Naive thymus-derived CD4-positive, alpha-beta T cell (primary cell): ENCODE measurements at regions of chr6 and their contacts with region 1.

Region 1: GRCh38 chr6:41976794-41977484 is 35.3 kb upstream of the CCND3 start:
- DNase-seq: peak in 1 of 9 donors; percentile 27
- ATAC-seq: no peak
- H3K4me3 ChIP-seq: no peak overlapping the region
- H3K4me3 Mint-ChIP-seq: peak overlapping the region in 8 of 10 donors; percentile 13 to 54 (median 44)
- H3K27ac ChIP-seq: peak overlapping the region; percentile 55
- H3K27ac Mint-ChIP-seq: peak overlapping the region; percentile 23 to 89 (median 82)
- H3K4me1 ChIP-seq: peaks cover 26 to 62% of the 10 kb centered on the region in 2 donors
- H3K4me1 Mint-ChIP-seq: peaks cover 44 to 85% (median 67%) of the 10 kb centered on the region in 7 donors
- H3K27me3 ChIP-seq: no peaks in the 10 kb centered on the region
- H3K27me3 Mint-ChIP-seq: no peaks in the 10 kb centered on the region

Region 2: GRCh38 chr6:39992861-39993622 is 1983.9 kb before region 1 on chr6:
- CTCF ChIA-PET with region 1: no interaction called
- POLR2A ChIA-PET with region 1: no interaction called
- intact Hi-C with region 1: no loop called
- DNase-seq: no peak
- ATAC-seq: no peak
- H3K4me3 ChIP-seq: no peak overlapping the region
- H3K4me3 Mint-ChIP-seq: no peak overlapping the region
- H3K27ac ChIP-seq: no peak overlapping the region
- H3K27ac Mint-ChIP-seq: no peak overlapping the region
- H3K4me1 ChIP-seq: no peaks in the 10 kb centered on the region
- H3K4me1 Mint-ChIP-seq: no peaks in the 10 kb centered on the region
- H3K27me3 ChIP-seq: no peaks in the 10 kb centered on the region
- H3K27me3 Mint-ChIP-seq: peaks cover 0 to 18% (median 12%) of the 10 kb centered on the region in 5 donors

Region 3: GRCh38 chr6:43181942-43182860 is 1205.3 kb after region 1 on chr6 and contains the start of gene CUL9:
- CTCF ChIA-PET with region 1: no interaction called
- POLR2A ChIA-PET with region 1: no interaction called
- intact Hi-C with region 1: loop called in 1 of 2 experiments (anchors 5 kb)
- DNase-seq: peak; percentile 71 to 88 (median 75)
- ATAC-seq: peak; percentile 98
- H3K4me3 ChIP-seq: peak within 1 kb of the TSS; percentile 81
- H3K4me3 Mint-ChIP-seq: peak within 1 kb of the TSS; percentile 88 to 99 (median 93)
- H3K27ac ChIP-seq: peak within 1 kb of the TSS; percentile 87
- H3K27ac Mint-ChIP-seq: peak within 1 kb of the TSS; percentile 86 to 97 (median 94)
- H3K4me1 ChIP-seq: peaks cover 34 to 51% of the 10 kb centered on the region in 2 donors
- H3K4me1 Mint-ChIP-seq: peaks cover 43 to 60% (median 57%) of the 10 kb centered on the region in 7 donors
- H3K27me3 ChIP-seq: no peaks in the 10 kb centered on the region
- H3K27me3 Mint-ChIP-seq: no peaks in the 10 kb centered on the region
- total RNA-seq, gene CUL9: 58.1 to 123 (median 111) TPM